Activated CD4-positive, alpha-beta memory T cell treated with anti-CD3 and anti-CD28 coated beads for 36 hours (primary cell): ENCODE measurements at regions of chr4 and their contacts with region 1.

Region 1: DNA sequence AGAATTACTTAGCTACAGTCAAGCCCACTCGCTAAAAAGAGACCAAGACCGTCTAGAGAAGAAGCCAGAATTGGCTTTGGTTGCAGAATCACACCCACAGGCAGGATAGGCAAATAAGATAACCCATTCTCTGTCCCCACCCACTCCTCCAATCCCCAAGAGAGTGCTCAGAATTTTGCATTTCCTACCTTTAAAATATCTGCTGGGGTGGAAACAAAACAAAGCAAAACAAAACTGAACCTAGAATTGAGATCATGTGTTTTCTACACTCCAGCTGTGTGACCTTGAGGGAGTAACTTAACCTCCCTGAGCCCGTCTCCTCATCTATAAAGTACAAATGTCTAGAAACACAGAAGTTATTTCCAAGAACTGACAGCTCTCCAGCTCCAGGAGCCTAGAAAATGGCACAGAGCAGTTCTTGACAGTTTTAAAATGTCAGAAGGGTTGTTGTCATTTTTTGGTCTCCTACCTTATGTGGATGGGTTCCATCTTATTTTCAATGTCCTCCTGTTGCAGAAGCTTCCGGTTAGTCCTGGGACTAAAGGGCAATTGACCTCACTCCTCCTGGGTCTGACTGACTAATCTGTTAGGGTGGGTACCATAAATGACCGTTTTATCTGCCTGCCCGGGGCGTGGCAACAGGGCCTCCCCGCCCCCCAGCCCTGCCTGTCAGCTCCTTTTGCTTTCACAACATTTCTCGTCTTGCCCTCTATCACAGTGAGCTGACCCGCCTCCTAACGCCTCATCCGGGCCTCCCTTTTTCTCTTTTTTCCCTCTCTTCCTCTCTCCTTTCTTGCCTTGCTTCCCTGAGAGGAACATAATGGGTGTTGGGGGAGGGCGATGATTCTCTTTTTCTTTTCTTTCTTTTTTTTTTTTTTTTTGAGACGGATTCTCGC is 114.0 kb downstream of the RBM47 start:
- DNase-seq: peak; percentile 25
- H3K4me3 Mint-ChIP-seq: no peak overlapping the region
- H3K27ac Mint-ChIP-seq: peak overlapping the region; percentile 28
- H3K4me1 Mint-ChIP-seq: peaks cover 17% of the 10 kb centered on the region
- H3K27me3 Mint-ChIP-seq: peaks cover 1% of the 10 kb centered on the region

Region 2: DNA sequence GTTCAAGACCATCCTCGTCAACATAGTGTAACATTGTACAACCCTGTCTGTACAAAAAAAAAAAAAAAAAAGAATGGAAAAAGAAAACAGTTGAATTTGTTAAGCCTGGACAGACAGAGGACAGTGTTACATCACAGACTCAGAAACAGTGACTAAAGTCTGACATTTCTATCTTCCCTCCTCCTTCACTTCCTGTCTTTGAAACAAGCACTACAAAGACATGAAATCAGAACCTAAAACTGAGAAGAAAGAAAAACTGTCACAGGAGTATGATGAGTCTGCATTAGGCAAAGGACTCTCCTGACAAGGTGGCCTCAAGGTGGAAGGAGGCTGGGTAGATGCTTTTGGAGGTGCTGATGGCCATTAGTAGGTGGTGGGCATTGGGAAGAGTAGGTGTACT is 12.7 kb before region 1 on chr4:
- CTCF ChIA-PET with region 1: no interaction called
- POLR2A ChIA-PET with region 1: no interaction called
- intact Hi-C with region 1: loop called (anchors 1 kb)
- DNase-seq: no peak
- H3K4me3 Mint-ChIP-seq: no peak overlapping the region
- H3K27ac Mint-ChIP-seq: peak overlapping the region; percentile 39
- H3K4me1 Mint-ChIP-seq: peaks cover 10% of the 10 kb centered on the region
- H3K27me3 Mint-ChIP-seq: no peaks in the 10 kb centered on the region

Region 3: GRCh38 chr4:40587823-40588222 is 72.2 kb after region 1 on chr4:
- CTCF ChIA-PET with region 1: no interaction called
- POLR2A ChIA-PET with region 1: no interaction called
- intact Hi-C with region 1: no loop called
- DNase-seq: no peak
- H3K4me3 Mint-ChIP-seq: no peak overlapping the region
- H3K27ac Mint-ChIP-seq: no peak overlapping the region
- H3K4me1 Mint-ChIP-seq: no peaks in the 10 kb centered on the region
- H3K27me3 Mint-ChIP-seq: no peaks in the 10 kb centered on the region

Region 4: DNA sequence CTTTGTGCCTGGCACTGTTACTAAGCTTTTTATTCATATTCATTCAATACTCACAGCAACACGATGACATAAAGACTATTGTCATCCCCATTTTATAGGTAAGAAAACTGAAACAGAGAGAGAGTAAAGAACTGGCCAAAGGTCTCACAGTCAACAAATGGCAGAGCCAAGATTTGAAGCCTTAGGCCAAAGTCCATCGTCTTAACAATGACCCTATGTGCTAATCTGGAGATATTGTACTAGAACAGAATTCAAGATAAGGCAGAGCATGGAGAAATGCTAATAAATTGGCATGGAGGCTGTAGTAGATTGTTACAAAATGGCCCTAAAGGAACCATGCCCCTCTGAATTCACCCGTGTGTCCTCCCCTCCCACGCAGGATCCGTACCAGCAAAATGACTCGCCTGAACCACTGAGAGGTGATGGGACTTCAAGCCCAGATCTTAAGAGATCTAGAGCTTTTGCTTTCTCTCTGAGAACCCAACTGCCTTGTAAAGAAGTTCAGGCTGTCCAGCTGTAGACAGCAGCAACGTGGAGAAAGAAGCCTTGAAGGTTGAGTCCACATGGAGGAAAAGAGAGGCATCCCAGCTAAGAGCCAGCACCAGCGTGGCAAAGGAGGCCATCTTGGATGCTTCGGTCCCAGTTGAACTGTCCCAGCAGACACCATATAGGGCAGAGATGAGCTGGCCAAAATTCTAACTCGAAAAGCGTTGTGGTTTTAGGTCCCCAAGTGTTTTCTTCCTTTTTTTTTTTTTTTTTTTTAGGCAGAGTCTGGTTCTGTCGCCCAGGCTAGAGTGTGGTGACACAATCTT is 166.8 kb after region 1 on chr4:
- CTCF ChIA-PET with region 1: no interaction called
- POLR2A ChIA-PET with region 1: no interaction called
- intact Hi-C with region 1: no loop called
- DNase-seq: peak; percentile 59
- H3K4me3 Mint-ChIP-seq: no peak overlapping the region
- H3K27ac Mint-ChIP-seq: peak overlapping the region; percentile 38
- H3K4me1 Mint-ChIP-seq: peaks cover 9% of the 10 kb centered on the region
- H3K27me3 Mint-ChIP-seq: peaks cover 1% of the 10 kb centered on the region